Natural killer cell (primary cell): ENCODE measurements at regions of chr11 and their contacts with region 1.

Region 1: GRCh38 chr11:77994412-77995362 is at the start of gene INTS4:
- DNase-seq: peak; percentile 92 to 99
- ATAC-seq: peak; percentile 97 to 100 (median 98)
- H3K4me3 ChIP-seq: peak within 1 kb of the TSS; percentile 66
- H3K4me3 Mint-ChIP-seq: peak within 1 kb of the TSS; percentile 90
- H3K27ac ChIP-seq: peak within 1 kb of the TSS; percentile 79
- H3K27ac Mint-ChIP-seq: peak within 1 kb of the TSS; percentile 91 to 93
- H3K4me1 ChIP-seq: peaks cover 18% of the 10 kb centered on the region
- H3K4me1 Mint-ChIP-seq: peaks cover 27 to 30% of the 10 kb centered on the region in 2 donors
- H3K27me3 ChIP-seq: no peaks in the 10 kb centered on the region
- H3K27me3 Mint-ChIP-seq: no peaks in the 10 kb centered on the region
- CTCF ChIP-seq: no peak
- total RNA-seq, gene INTS4: 65.2 to 97.8 (median 67.5) TPM

Region 2: DNA sequence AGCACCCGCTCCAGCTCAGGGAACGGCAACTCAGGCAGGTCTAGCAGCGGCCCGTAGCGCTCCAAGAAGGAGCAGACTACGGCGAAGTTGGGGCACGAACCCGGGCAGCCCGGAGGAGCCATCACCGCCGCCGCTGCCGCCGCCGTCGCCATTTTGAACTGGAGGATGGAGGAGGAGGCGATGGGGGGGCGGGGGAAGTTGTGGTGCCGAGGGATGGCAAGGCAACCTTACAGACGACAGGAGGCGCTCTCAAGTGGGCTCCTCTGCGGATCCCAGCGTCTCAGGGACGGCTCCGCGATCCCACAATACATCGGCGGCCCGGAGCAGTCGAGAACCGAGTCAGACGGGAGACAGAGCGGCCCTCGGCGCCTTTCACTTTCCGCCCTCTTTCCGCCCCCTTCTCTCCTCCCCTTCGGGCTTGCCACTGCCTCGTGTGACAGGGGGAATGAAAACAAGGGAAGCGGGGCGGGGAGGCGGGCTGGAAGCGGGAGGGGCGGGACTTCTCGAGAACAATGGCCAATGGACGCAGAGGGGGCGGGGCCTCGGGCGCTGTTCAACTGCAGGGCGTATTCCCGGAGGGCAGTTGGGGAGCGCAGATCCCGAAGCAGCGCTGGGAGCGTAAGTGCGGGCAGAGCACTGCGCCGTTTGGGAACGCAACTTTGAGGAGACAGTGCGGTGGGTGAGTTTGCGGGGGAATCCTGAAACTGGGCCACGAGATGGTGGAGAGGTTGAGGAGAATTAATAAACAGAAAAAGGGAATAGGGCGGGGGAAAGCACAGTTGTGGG is 173.9 kb before region 1 on chr11 and contains the starts of genes AAMDC and RSF1:
- intact Hi-C with region 1: loop called (anchors 1 kb)
- DNase-seq: peak; percentile 93 to 98
- ATAC-seq: peak; percentile 79 to 92 (median 83)
- H3K4me3 ChIP-seq: peak within 1 kb of the TSS; percentile 97
- H3K4me3 Mint-ChIP-seq: peak within 1 kb of the TSS; percentile 100
- H3K27ac ChIP-seq: peak within 1 kb of the TSS; percentile 94
- H3K27ac Mint-ChIP-seq: peak within 1 kb of the TSS; percentile 92
- H3K4me1 ChIP-seq: peaks cover 13% of the 10 kb centered on the region
- H3K4me1 Mint-ChIP-seq: peaks cover 41 to 49% of the 10 kb centered on the region in 2 donors
- H3K27me3 ChIP-seq: no peaks in the 10 kb centered on the region
- H3K27me3 Mint-ChIP-seq: no peaks in the 10 kb centered on the region
- CTCF ChIP-seq: peak; percentile 69
- total RNA-seq, gene AAMDC: 4.8 to 5.7 (median 5.4) TPM
- total RNA-seq, gene RSF1: 87.3 to 119 (median 110) TPM

Region 3: GRCh38 chr11:78050964-78051831 is 56.5 kb after region 1 on chr11:
- intact Hi-C with region 1: no loop called
- DNase-seq: no peak
- ATAC-seq: no peak
- H3K4me3 ChIP-seq: no peak overlapping the region
- H3K4me3 Mint-ChIP-seq: no peak overlapping the region
- H3K27ac ChIP-seq: no peak overlapping the region
- H3K27ac Mint-ChIP-seq: no peak overlapping the region
- H3K4me1 ChIP-seq: no peaks in the 10 kb centered on the region
- H3K4me1 Mint-ChIP-seq: peaks cover 3% of the 10 kb centered on the region in 2 donors
- H3K27me3 ChIP-seq: no peaks in the 10 kb centered on the region
- H3K27me3 Mint-ChIP-seq: no peaks in the 10 kb centered on the region
- CTCF ChIP-seq: no peak

Region 4: GRCh38 chr11:78112582-78113275 is 118.0 kb after region 1 on chr11:
- intact Hi-C with region 1: no loop called
- DNase-seq: no peak
- ATAC-seq: no peak
- H3K4me3 ChIP-seq: no peak overlapping the region
- H3K4me3 Mint-ChIP-seq: no peak overlapping the region
- H3K27ac ChIP-seq: no peak overlapping the region
- H3K27ac Mint-ChIP-seq: no peak overlapping the region
- H3K4me1 ChIP-seq: no peaks in the 10 kb centered on the region
- H3K4me1 Mint-ChIP-seq: no peaks in the 10 kb centered on the region
- H3K27me3 ChIP-seq: no peaks in the 10 kb centered on the region
- H3K27me3 Mint-ChIP-seq: no peaks in the 10 kb centered on the region
- CTCF ChIP-seq: no peak

Region 5: GRCh38 chr11:78139422-78140391 is 145.0 kb after region 1 on chr11 and contains the start of gene ALG8:
- intact Hi-C with region 1: loop called (anchors 1 kb)
- DNase-seq: peak; percentile 96 to 98
- ATAC-seq: peak; percentile 96 to 97 (median 96)
- H3K4me3 ChIP-seq: peak within 1 kb of the TSS; percentile 73
- H3K4me3 Mint-ChIP-seq: peak within 1 kb of the TSS; percentile 95
- H3K27ac ChIP-seq: peak within 1 kb of the TSS; percentile 54
- H3K27ac Mint-ChIP-seq: peak within 1 kb of the TSS; percentile 80 to 91
- H3K4me1 ChIP-seq: peaks cover 14% of the 10 kb centered on the region
- H3K4me1 Mint-ChIP-seq: peaks cover 29 to 30% of the 10 kb centered on the region in 2 donors
- H3K27me3 ChIP-seq: no peaks in the 10 kb centered on the region
- H3K27me3 Mint-ChIP-seq: no peaks in the 10 kb centered on the region
- CTCF ChIP-seq: no peak
- total RNA-seq, gene ALG8: 19.2 to 20.1 (median 19.8) TPM

Region 6: DNA sequence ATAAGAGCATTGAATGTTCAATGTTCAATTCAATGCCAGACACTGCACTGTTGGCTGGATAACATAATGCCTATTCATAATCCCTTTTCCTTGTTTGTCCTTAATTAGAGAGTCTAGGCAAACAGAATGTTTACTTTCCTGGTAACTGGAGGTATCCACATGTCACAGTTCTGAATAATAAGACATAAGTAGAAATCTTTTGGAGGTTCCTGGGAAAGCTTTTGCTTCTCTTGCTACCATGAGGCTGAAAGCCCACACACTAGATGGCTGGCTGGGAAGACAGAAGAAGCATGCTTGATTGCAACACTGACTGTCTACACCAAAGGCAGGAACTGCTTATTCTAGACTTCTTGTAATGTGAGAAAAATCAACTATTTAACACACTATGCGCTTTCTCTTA is 343.5 kb after region 1 on chr11:
- intact Hi-C with region 1: no loop called
- DNase-seq: no peak
- ATAC-seq: no peak
- H3K4me3 ChIP-seq: no peak overlapping the region
- H3K4me3 Mint-ChIP-seq: no peak overlapping the region
- H3K27ac ChIP-seq: no peak overlapping the region
- H3K27ac Mint-ChIP-seq: no peak overlapping the region
- H3K4me1 ChIP-seq: no peaks in the 10 kb centered on the region
- H3K4me1 Mint-ChIP-seq: peaks cover 0 to 12% of the 10 kb centered on the region in 2 donors
- H3K27me3 ChIP-seq: no peaks in the 10 kb centered on the region
- H3K27me3 Mint-ChIP-seq: peaks cover 0 to 7% of the 10 kb centered on the region in 2 donors
- CTCF ChIP-seq: no peak

Region 7: GRCh38 chr11:79212741-79213190 is 1218.1 kb after region 1 on chr11:
- intact Hi-C with region 1: no loop called
- DNase-seq: no peak
- ATAC-seq: no peak
- H3K4me3 ChIP-seq: no peak overlapping the region
- H3K4me3 Mint-ChIP-seq: no peak overlapping the region
- H3K27ac ChIP-seq: no peak overlapping the region
- H3K27ac Mint-ChIP-seq: no peak overlapping the region
- H3K4me1 ChIP-seq: no peaks in the 10 kb centered on the region
- H3K4me1 Mint-ChIP-seq: no peaks in the 10 kb centered on the region
- H3K27me3 ChIP-seq: no peaks in the 10 kb centered on the region
- H3K27me3 Mint-ChIP-seq: no peaks in the 10 kb centered on the region
- CTCF ChIP-seq: no peak